SK-N-SH (cell line): ENCODE measurements at regions of chr2 and their contacts with region 1.

Region 1: GRCh38 chr2:54704688-54705605 is 18.5 kb upstream of the EML6 start:
- DNase-seq: peak; percentile 61
- H3K4me3 ChIP-seq: no peak overlapping the region; a peak in 1 of 4 replicates
- H3K27ac ChIP-seq: no peak overlapping the region; a peak in 1 of 4 replicates
- H3K4me1 ChIP-seq: no peaks in the 10 kb centered on the region; a peak in 1 of 4 replicates
- H3K27me3 ChIP-seq: no peaks in the 10 kb centered on the region
- CTCF ChIP-seq: peak; percentile 79
- EP300 ChIP-seq: no peak
- RAD21 ChIP-seq: peak; percentile 89

Region 2: GRCh38 chr2:54106631-54107454 is 598.1 kb before region 1 on chr2:
- CTCF ChIA-PET with region 1: interaction called, 93 read pairs
- POLR2A ChIA-PET with region 1: interaction called, 3 read pairs
- DNase-seq: peak; percentile 59
- H3K4me3 ChIP-seq: no peak overlapping the region; a peak in 1 of 4 replicates
- H3K27ac ChIP-seq: peak overlapping the region; percentile 6 to 97; a peak in 3 of 4 replicates
- H3K4me1 ChIP-seq: peaks cover 8 to 34% of the 10 kb centered on the region in 2 experiments
- H3K27me3 ChIP-seq: no peaks in the 10 kb centered on the region
- CTCF ChIP-seq: peak; percentile 88
- EP300 ChIP-seq: no peak
- RAD21 ChIP-seq: peak; percentile 93

Region 3: DNA sequence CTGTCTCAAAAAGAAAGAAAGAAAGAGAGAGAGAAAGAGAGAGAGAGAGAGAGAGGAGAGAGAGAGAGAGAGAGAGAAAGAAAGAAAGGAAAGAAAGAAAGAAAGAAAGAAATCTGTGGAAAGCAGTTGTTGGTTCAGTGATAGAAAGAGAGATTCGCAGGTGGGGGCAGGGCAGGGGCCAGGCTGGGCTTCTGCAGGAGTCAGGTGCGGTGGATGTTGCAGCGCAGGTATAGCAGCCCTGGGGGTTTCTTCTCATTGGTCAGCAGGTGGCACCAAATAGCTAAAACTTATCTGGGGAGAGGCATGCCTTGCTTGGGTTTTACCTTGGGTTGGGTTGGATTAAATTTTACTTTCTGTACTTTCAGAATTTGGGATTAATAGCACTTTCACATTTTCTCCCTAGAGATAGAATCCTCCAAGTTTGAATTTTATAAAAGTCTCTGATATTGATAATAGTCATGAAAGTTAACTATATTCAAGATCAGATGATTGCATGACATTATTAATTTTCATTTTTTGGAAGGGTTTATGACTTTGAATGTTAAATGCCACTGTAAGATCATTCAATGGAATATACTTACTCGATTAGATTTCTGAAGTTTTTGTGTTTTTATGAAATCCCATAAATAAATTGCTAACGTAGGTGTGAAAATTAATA is 182.2 kb before region 1 on chr2:
- CTCF ChIA-PET with region 1: interaction called, 21 read pairs
- POLR2A ChIA-PET with region 1: no interaction called
- DNase-seq: peak; percentile 60
- H3K4me3 ChIP-seq: no peak overlapping the region
- H3K27ac ChIP-seq: no peak overlapping the region
- H3K4me1 ChIP-seq: peaks cover 3 to 34% of the 10 kb centered on the region in 2 experiments; a peak in 3 of 4 replicates
- H3K27me3 ChIP-seq: no peaks in the 10 kb centered on the region
- CTCF ChIP-seq: peak; percentile 68
- EP300 ChIP-seq: no peak
- RAD21 ChIP-seq: peak; percentile 79

Region 4: GRCh38 chr2:54665436-54665856 is 39.5 kb before region 1 on chr2:
- CTCF ChIA-PET with region 1: interaction called, 28 read pairs
- POLR2A ChIA-PET with region 1: no interaction called
- DNase-seq: peak; percentile 48
- H3K4me3 ChIP-seq: no peak overlapping the region; a peak in 1 of 4 replicates
- H3K27ac ChIP-seq: peak overlapping the region; percentile 34 to 73; a peak in 3 of 4 replicates
- H3K4me1 ChIP-seq: peaks cover 2 to 31% of the 10 kb centered on the region in 2 experiments; a peak in 3 of 4 replicates
- H3K27me3 ChIP-seq: no peaks in the 10 kb centered on the region
- CTCF ChIP-seq: peak; percentile 71
- EP300 ChIP-seq: no peak
- RAD21 ChIP-seq: peak; percentile 53

Region 5: DNA sequence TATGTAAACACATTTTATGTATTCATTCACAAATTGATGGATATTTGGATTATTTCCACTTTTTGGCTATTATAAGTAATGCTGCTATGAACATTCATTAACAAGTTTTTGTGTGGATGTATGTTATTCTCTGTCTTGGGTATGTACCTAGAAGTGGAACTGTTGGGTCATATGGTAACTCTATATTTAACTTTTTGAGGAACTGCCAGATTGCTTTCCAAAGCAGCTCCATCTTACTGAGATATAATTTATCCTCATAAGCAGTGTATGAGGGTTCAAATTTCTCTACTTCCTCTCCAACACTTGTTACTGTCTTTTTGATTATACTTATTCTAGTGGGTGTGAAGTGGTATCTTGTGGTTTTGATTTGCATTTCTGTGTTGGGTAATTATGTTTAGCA is 11.4 kb after region 1 on chr2:
- CTCF ChIA-PET with region 1: interaction called, 28 read pairs
- POLR2A ChIA-PET with region 1: no interaction called
- DNase-seq: no peak
- H3K4me3 ChIP-seq: no peak overlapping the region
- H3K27ac ChIP-seq: no peak overlapping the region
- H3K4me1 ChIP-seq: no peaks in the 10 kb centered on the region; a peak in 1 of 4 replicates
- H3K27me3 ChIP-seq: no peaks in the 10 kb centered on the region
- CTCF ChIP-seq: no peak
- EP300 ChIP-seq: no peak
- RAD21 ChIP-seq: no peak

Region 6: DNA sequence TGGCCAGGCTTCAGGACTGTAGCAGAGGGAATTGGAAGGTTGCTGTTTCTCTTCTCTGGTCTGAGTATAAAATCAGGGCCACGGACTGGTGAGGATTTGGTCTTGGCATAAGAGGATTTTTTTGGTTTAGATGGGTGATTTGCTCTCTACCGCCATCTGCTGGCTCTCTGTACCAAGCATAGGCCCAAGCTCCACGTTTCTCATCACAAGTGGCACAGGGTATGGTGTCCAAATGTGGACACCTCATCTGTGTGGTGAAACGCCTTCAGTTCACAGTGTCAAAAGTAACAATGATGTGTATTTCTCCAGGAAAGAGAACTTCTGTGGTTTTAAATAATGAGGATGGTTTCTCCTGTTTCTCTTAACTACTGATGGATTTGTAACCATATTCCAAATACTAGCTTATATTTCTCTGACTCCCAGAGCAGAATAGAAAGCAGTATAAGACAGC is 133.7 kb after region 1 on chr2:
- CTCF ChIA-PET with region 1: interaction called, 11 read pairs
- POLR2A ChIA-PET with region 1: no interaction called
- DNase-seq: peak; percentile 66
- H3K4me3 ChIP-seq: peak overlapping the region in 1 of 2 experiments; percentile 27; a peak in 1 of 4 replicates
- H3K27ac ChIP-seq: no peak overlapping the region
- H3K4me1 ChIP-seq: peaks cover 0 to 4% of the 10 kb centered on the region in 2 experiments; a peak in 2 of 4 replicates
- H3K27me3 ChIP-seq: no peaks in the 10 kb centered on the region
- CTCF ChIP-seq: peak; percentile 95
- EP300 ChIP-seq: no peak
- RAD21 ChIP-seq: peak; percentile 81